Activated T-helper 2 cell treated with anti-CD3 and anti-CD28 coated beads, Interferon-gamma antibody, Interleukin-2, Interleukin-4, amounts not matched to agents 10 μg/mL and 5 μg/mL and 100 μg/mL, durations not matched to agents 14 hours and 24 hours and 36 hours (primary cell): ENCODE measurements at regions of chr2 and their contacts with region 1.

Region 1: GRCh38 chr2:10832203-10832936 is 19.8 kb upstream of the PDIA6 start:
- DNase-seq: peak; percentile 73
- H3K4me3 Mint-ChIP-seq: no peak overlapping the region
- H3K27ac Mint-ChIP-seq: no peak overlapping the region
- H3K4me1 Mint-ChIP-seq: peaks cover 2% of the 10 kb centered on the region
- H3K27me3 Mint-ChIP-seq: peaks cover 28% of the 10 kb centered on the region

Region 2: GRCh38 chr2:10812362-10813162 is 19.8 kb before region 1 on chr2 and contains the start of gene PDIA6:
- intact Hi-C with region 1: no loop called
- DNase-seq: peak; percentile 95
- H3K4me3 Mint-ChIP-seq: peak within 1 kb of the TSS; percentile 89
- H3K27ac Mint-ChIP-seq: peak within 1 kb of the TSS; percentile 92
- H3K4me1 Mint-ChIP-seq: peaks cover 33% of the 10 kb centered on the region
- H3K27me3 Mint-ChIP-seq: peaks cover 18% of the 10 kb centered on the region
- total RNA-seq, gene PDIA6: 210 and 211 TPM in 2 replicates

Region 3: GRCh38 chr2:10911261-10912075 is 79.1 kb after region 1 on chr2 and contains the start of gene KCNF1:
- intact Hi-C with region 1: loop called (anchors 10 kb)
- DNase-seq: no peak
- H3K4me3 Mint-ChIP-seq: no peak within 1 kb of the TSS
- H3K27ac Mint-ChIP-seq: no peak within 1 kb of the TSS
- H3K4me1 Mint-ChIP-seq: no peaks in the 10 kb centered on the region
- H3K27me3 Mint-ChIP-seq: peaks cover 38% of the 10 kb centered on the region
- total RNA-seq, gene KCNF1: not detected in 2 replicates

Region 4: GRCh38 chr2:11124503-11125068 is 292.2 kb after region 1 on chr2:
- intact Hi-C with region 1: loop called (anchors 1 kb)
- DNase-seq: peak; percentile 56
- H3K4me3 Mint-ChIP-seq: no peak overlapping the region
- H3K27ac Mint-ChIP-seq: no peak overlapping the region
- H3K4me1 Mint-ChIP-seq: peaks cover 6% of the 10 kb centered on the region
- H3K27me3 Mint-ChIP-seq: peaks cover 28% of the 10 kb centered on the region